Sigmoid colon (tissue), 7 donors: ENCODE measurements at regions of chr1 and their contacts with region 1.

Region 1: DNA sequence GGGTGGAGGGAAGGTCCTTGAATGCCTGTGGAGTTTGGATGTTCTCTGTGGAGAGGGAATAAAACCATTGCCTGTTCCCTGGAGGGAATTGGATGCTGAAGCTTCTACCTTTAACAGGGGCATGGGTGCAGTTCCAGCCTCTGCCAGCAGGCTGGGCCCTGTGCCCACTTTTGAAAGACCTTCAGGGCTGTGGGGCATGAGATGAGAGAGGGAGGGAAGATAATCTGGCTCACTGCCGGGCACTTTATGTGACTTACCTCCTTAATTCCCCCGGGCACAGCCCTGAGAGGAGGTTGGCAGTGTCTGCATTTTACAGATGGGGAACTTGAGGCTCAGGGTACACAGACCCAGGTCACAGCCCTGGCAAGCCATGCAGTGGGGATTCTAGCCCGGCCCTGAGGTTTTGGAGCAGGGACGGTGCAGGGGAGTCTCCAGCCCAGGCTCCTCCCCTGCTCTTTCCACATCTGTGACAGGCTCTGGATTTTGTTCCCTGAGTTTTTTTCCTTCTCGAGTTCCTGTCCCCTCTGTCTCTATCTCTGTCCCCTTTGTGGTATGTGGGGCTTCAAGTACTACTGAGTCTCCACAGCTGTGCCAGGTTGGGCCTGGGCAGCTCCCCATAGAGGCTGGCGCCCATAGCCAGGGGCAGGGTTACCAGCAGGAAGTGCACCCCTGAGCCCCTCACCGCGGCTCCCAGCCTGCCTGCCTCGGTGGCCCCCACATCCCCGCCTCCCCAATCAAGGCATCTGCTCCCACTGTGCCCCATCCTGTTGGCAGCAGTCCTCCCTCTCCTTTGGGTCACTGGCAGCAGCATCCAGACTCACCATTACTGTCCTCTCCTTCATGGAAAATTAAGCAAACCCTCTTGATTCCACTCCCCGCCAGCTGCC is 14.0 kb upstream of the THEMIS2 start:
- DNase-seq: peak; percentile 92
- H3K4me3 ChIP-seq: peak overlapping the region in 1 of 4 donors; percentile 7
- H3K27ac ChIP-seq: peak overlapping the region in 1 of 4 donors; percentile 53
- H3K4me1 ChIP-seq: peaks cover 0 to 11% (median 4%) of the 10 kb centered on the region in 4 donors
- H3K27me3 ChIP-seq: no peaks in the 10 kb centered on the region
- CTCF ChIP-seq: peak; percentile 71 to 93 (median 86)
- EP300 ChIP-seq: no peak
- POLR2A ChIP-seq: no peak

Region 2: DNA sequence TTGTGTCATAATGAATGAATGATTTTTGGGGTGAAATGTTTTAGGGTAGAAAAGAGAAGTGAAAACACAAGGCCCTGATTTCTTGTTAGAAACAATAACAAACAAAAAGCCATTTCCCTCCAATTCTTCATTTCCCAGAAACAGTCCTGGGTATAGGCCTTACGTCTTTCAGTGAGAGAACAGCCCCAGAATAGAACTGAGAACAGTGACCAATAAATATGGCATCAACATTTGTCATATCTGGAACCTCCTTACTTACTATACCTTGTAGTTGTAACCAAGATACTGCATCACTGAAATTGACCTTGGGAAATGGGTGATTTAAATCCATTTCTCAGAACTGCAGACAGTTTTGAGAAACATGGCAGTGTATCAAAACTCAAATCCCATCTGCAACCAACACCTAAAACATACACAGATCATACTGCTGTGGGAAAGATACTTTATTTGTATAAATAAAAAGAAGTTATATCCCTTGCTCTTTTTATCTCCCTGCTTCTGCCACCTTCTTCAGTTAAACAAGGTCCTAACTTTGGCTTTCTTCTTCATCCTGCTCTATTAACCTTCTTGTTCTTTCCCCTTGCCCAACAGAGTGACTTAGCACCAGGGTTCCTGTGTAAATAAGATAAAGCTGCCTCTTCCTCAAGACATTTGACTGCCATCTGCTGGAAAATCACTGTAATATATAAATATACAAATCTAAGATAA is 121.0 kb after region 1 on chr1:
- intact Hi-C with region 1: loop called (anchors 1 kb)
- DNase-seq: no peak
- H3K4me3 ChIP-seq: no peak overlapping the region
- H3K27ac ChIP-seq: peak overlapping the region in 1 of 4 donors; percentile 28
- H3K4me1 ChIP-seq: peaks cover 0 to 2% (median 0%) of the 10 kb centered on the region in 4 donors
- H3K27me3 ChIP-seq: no peaks in the 10 kb centered on the region
- CTCF ChIP-seq: peak in 3 of 4 experiments; percentile 33 to 54 (median 39)
- EP300 ChIP-seq: no peak
- POLR2A ChIP-seq: no peak